ENCODE measurements at regions of chr3 and their contacts with region 1.

Region 1: DNA sequence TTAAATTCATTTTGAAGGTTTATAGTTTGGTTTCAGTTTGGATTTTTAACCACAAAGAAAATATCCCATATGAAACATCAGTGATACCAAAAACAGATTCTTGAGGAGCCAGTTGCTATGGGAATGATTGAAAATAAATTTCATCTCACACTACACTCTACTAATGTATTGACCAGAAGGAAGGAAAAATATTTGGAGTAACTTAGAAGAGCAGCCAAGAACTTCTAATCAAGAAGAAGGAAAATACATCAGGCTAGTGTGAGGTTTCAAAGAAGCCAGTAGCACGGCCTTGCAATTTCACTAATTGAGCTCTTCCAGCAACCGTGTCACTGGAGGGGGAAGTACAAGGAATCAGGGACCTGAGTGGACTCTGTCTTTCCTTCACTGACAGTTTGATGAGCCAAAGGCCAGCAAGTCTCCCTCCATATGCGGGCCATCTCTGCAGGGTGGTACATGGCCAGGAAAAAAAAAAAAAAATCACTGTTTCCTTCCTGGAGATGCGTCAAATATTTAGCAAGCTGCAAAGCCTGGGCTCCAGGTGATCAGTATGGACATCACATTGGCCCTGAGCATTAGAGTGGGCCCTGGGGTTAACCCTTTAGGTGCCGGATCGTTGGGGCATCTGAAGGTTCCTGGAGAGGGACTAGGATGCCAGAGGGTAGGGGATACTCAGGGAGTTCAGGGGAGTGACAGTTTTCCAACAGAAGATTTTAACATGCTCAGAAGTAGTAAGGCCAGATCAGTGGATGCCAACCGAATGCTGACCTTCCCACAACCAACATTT is 37.1 kb downstream of the SLC12A8 start:
- DNase-seq: no peak
- H3K4me3 ChIP-seq: no peak overlapping the region
- H3K27ac ChIP-seq: no peak overlapping the region
- H3K4me1 ChIP-seq: no peaks in the 10 kb centered on the region
- H3K27me3 ChIP-seq: no peaks in the 10 kb centered on the region
- CTCF ChIP-seq: no peak

Region 2: DNA sequence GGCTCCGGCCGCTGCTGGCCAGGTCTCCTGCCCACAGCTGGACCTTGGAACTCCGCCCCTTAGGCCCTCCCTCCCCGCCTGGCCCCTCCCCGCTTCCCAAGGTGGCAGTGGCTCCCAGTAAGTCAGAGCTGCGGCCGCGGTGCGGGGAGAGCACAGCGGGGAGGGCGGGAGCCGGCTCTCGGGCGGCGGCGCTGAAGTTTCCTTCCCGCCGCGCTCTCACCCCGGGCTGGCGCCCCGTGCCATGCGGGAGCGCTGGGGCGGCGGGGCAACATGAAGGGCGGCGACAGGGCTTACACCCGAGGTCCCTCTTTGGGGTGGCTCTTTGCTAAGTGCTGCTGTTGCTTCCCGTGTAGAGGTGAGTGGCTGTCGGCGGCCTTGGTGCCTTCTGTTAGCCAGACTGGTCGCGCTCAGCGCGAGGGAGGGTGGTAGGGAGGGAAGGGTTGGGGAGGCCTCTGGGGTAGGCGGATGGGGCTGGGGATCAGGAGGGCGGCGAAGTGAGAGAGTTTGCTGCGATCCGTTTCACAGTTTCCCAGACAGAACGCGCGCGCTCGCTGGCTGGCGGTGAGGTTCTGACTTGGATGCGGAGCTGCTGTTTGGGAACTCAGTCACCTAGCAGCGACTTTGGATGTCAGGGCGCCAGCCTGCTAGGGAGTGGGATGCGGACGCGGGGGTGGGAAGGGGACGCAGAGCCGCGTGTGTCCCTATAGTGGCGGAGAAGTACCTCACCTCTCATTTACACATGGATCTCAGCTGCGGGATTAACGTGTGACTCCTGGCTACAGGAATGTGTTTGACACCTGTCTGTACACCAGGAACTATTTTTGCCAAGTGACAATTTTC is 590.7 kb before region 1 on chr3:
- CTCF ChIA-PET with region 1: no interaction called
- POLR2A ChIA-PET with region 1: no interaction called
- intact Hi-C with region 1: no loop called
- DNase-seq: peak; percentile 64
- H3K4me3 ChIP-seq: peak overlapping the region; percentile 66
- H3K27ac ChIP-seq: peak overlapping the region; percentile 61
- H3K4me1 ChIP-seq: peaks cover 24% of the 10 kb centered on the region
- H3K27me3 ChIP-seq: no peaks in the 10 kb centered on the region
- CTCF ChIP-seq: no peak

Region 3: GRCh38 chr3:124620600-124621063 is 554.9 kb before region 1 on chr3:
- CTCF ChIA-PET with region 1: no interaction called
- POLR2A ChIA-PET with region 1: interaction called, 10 read pairs
- intact Hi-C with region 1: no loop called
- DNase-seq: no peak
- H3K4me3 ChIP-seq: no peak overlapping the region
- H3K27ac ChIP-seq: no peak overlapping the region
- H3K4me1 ChIP-seq: peaks cover 4% of the 10 kb centered on the region
- H3K27me3 ChIP-seq: no peaks in the 10 kb centered on the region
- CTCF ChIP-seq: no peak

Region 4: DNA sequence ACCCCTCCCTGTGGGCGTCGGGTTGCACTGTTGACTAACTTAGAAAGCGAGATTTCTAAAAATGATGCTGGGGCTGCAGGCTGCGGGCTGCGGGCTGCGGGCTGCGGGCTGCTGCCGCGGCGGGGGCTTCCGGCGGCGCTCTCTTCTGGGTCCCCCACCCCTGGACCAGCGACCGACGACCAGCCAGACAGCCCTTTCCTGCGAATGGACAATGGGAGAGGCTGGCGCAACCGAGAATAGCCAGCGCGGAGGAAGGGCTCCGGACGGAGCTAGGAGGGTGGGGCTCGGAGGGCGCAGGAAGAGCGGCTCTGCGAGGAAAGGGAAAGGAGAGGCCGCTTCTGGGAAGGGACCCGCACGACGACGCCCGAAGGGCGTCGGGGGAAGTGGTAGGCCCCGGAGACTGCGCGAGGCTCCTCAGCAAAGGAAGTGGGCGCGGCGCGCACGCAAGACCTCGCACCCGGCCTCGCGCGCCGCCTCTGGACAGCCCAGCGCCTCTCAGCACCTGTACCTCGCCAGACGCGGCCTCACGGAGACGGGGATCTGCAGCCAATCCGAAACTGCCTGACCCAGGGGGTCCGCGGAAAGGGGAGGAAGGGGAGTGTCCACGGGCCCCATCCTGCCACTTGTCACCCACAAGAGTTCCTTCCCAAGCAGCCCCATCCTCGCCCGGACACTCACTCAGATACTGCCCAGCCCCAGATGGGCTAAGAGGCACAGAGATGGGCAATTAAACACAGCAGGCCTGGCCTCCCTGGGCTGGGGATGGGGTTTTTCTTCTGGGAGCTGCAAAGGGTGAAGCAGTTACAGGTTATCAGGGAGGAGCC is 33.7 kb before region 1 on chr3:
- CTCF ChIA-PET with region 1: no interaction called
- POLR2A ChIA-PET with region 1: no interaction called
- intact Hi-C with region 1: no loop called
- DNase-seq: peak; percentile 28
- H3K4me3 ChIP-seq: peak overlapping the region; percentile 23
- H3K27ac ChIP-seq: no peak overlapping the region
- H3K4me1 ChIP-seq: peaks cover 6% of the 10 kb centered on the region
- H3K27me3 ChIP-seq: no peaks in the 10 kb centered on the region
- CTCF ChIP-seq: no peak